Dendritic cell treated with granulocyte-macrophage colony-stimulating factor and Interleukin-4, amounts not matched to agents 40 ng/mL and 50 ng/mL, for 4 days (primary cell): ENCODE measurements at regions of chr12 and their contacts with region 1.

Region 1: GRCh38 chr12:110577717-110578521 is 5.2 kb downstream of the PPTC7 start:
- H3K4me3 Mint-ChIP-seq: peak overlapping the region; percentile 15
- H3K27ac Mint-ChIP-seq: peak overlapping the region; percentile 87
- H3K4me1 Mint-ChIP-seq: peaks cover 58% of the 10 kb centered on the region
- H3K27me3 Mint-ChIP-seq: no peaks in the 10 kb centered on the region

Region 2: GRCh38 chr12:110563702-110564640 is 13.9 kb before region 1 on chr12:
- intact Hi-C with region 1: loop called (anchors 2 kb)
- H3K4me3 Mint-ChIP-seq: no peak overlapping the region
- H3K27ac Mint-ChIP-seq: peak overlapping the region; percentile 57
- H3K4me1 Mint-ChIP-seq: peaks cover 66% of the 10 kb centered on the region
- H3K27me3 Mint-ChIP-seq: no peaks in the 10 kb centered on the region

Region 3: GRCh38 chr12:110661337-110661972 is 83.5 kb after region 1 on chr12:
- intact Hi-C with region 1: no loop called
- H3K4me3 Mint-ChIP-seq: peak overlapping the region; percentile 44
- H3K27ac Mint-ChIP-seq: peak overlapping the region; percentile 74
- H3K4me1 Mint-ChIP-seq: peaks cover 40% of the 10 kb centered on the region
- H3K27me3 Mint-ChIP-seq: no peaks in the 10 kb centered on the region